CD14-positive monocyte (primary cell): ENCODE measurements at regions of chr9 and their contacts with region 1.

Region 1: GRCh38 chr9:136400038-136400834 is at the start of gene SNAPC4:
- DNase-seq: peak; percentile 79 to 89 (median 86)
- H3K4me3 ChIP-seq: peak within 1 kb of the TSS; percentile 47 to 88 (median 77)
- H3K4me3 Mint-ChIP-seq: peak within 1 kb of the TSS; percentile 83 to 88
- H3K27ac ChIP-seq: peak within 1 kb of the TSS in 1 of 2 donors; percentile 62
- H3K27ac Mint-ChIP-seq: peak within 1 kb of the TSS in 5 of 7 donors; percentile 30 to 52 (median 44)
- H3K4me1 ChIP-seq: peaks cover 17 to 23% of the 10 kb centered on the region in 2 donors
- H3K4me1 Mint-ChIP-seq: peaks cover 19% of the 10 kb centered on the region
- H3K27me3 ChIP-seq: no peaks in the 10 kb centered on the region
- H3K27me3 Mint-ChIP-seq: peaks cover 0 to 4% (median 4%) of the 10 kb centered on the region in 3 donors
- CTCF ChIP-seq: peak; percentile 94
- polyA plus RNA-seq, gene SNAPC4: 0.59 to 6.7 (median 1.2) TPM

Region 2: DNA sequence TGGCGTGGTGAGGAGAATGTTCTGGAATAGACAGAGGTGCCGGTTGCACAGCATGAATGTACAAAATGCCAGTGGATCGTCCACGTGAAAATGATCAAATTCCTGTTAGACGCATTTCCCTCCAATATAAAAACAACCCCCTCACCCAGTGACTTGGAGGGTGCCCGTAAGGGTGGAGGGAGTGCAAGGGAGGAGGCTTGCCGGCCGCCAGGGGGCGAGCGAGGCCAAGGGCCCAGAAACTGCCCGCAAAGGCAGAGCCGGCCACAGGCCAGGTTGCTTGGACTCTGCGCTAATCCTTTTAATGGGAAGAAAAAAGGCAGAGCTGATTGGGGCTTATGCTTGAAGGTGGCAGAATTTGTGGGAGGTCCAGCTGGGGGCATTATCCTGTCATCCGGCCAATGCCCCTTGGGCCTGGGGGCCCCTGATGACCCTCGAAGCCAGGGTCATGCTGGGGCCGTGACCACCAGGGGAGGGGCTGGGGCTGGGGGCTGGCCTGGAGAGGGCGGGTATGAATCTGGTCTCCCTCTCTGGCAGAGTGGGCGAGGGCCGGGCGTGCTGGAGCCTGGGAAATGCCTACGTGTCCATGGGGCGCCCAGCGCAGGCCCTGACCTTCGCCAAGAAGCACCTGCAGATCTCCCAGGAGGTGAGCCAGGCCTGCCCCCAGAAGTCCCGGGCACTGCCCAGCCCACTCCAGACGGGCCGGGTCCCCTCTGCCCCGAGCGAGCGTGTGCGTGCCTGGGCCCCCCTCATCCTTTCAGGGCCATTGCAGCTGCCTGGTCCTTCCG is 60.9 kb before region 1 on chr9:
- intact Hi-C with region 1: loop called (anchors 2 kb)
- DNase-seq: peak; percentile 44 to 59 (median 57)
- H3K4me3 ChIP-seq: no peak overlapping the region
- H3K4me3 Mint-ChIP-seq: no peak overlapping the region
- H3K27ac ChIP-seq: no peak overlapping the region
- H3K27ac Mint-ChIP-seq: peak overlapping the region in 2 of 7 donors; percentile 44 to 60
- H3K4me1 ChIP-seq: peaks cover 10 to 12% of the 10 kb centered on the region in 2 donors
- H3K4me1 Mint-ChIP-seq: peaks cover 2% of the 10 kb centered on the region
- H3K27me3 ChIP-seq: no peaks in the 10 kb centered on the region
- H3K27me3 Mint-ChIP-seq: no peaks in the 10 kb centered on the region
- CTCF ChIP-seq: peak; percentile 88

Region 3: GRCh38 chr9:136372561-136373299 is 27.5 kb before region 1 on chr9:
- intact Hi-C with region 1: loop called in 1 of 2 experiments (anchors 2 kb)
- DNase-seq: peak; percentile 76 to 87 (median 81)
- H3K4me3 ChIP-seq: peak overlapping the region; percentile 67 to 88 (median 85)
- H3K4me3 Mint-ChIP-seq: peak overlapping the region; percentile 94
- H3K27ac ChIP-seq: peak overlapping the region; percentile 45 to 75
- H3K27ac Mint-ChIP-seq: peak overlapping the region; percentile 70 to 94 (median 92)
- H3K4me1 ChIP-seq: peaks cover 38 to 45% of the 10 kb centered on the region in 2 donors
- H3K4me1 Mint-ChIP-seq: peaks cover 27% of the 10 kb centered on the region
- H3K27me3 ChIP-seq: no peaks in the 10 kb centered on the region
- H3K27me3 Mint-ChIP-seq: no peaks in the 10 kb centered on the region
- CTCF ChIP-seq: no peak